Activated CD4-positive, alpha-beta memory T cell treated with anti-CD3 and anti-CD28 coated beads for 36 hours (primary cell): ENCODE measurements at regions of chr16 and their contacts with region 1.

Region 1: GRCh38 chr16:69565671-69566239 is at the start of gene NFAT5:
- DNase-seq: peak; percentile 92
- H3K4me3 Mint-ChIP-seq: peak within 1 kb of the TSS; percentile 96
- H3K27ac Mint-ChIP-seq: peak within 1 kb of the TSS; percentile 94
- H3K4me1 Mint-ChIP-seq: peaks cover 45% of the 10 kb centered on the region
- H3K27me3 Mint-ChIP-seq: no peaks in the 10 kb centered on the region
- total RNA-seq, gene NFAT5: 28.2 to 32.7 TPM

Region 2: GRCh38 chr16:68756250-68756915 is 809.4 kb before region 1 on chr16:
- CTCF ChIA-PET with region 1: no interaction called
- POLR2A ChIA-PET with region 1: no interaction called
- intact Hi-C with region 1: loop called (anchors 10 kb)
- DNase-seq: peak; percentile 89
- H3K4me3 Mint-ChIP-seq: peak overlapping the region; percentile 58
- H3K27ac Mint-ChIP-seq: peak overlapping the region; percentile 96
- H3K4me1 Mint-ChIP-seq: peaks cover 64% of the 10 kb centered on the region
- H3K27me3 Mint-ChIP-seq: no peaks in the 10 kb centered on the region

Region 3: GRCh38 chr16:69386596-69386995 is 179.2 kb before region 1 on chr16:
- CTCF ChIA-PET with region 1: no interaction called
- POLR2A ChIA-PET with region 1: interaction called, 4 read pairs
- intact Hi-C with region 1: loop called (anchors 1 kb)
- DNase-seq: no peak
- H3K4me3 Mint-ChIP-seq: peak overlapping the region; percentile 93
- H3K27ac Mint-ChIP-seq: no peak overlapping the region
- H3K4me1 Mint-ChIP-seq: peaks cover 28% of the 10 kb centered on the region
- H3K27me3 Mint-ChIP-seq: no peaks in the 10 kb centered on the region

Region 4: GRCh38 chr16:69424053-69424934 is 141.5 kb before region 1 on chr16 and contains the start of gene CYB5B:
- CTCF ChIA-PET with region 1: interaction called, 8 read pairs
- POLR2A ChIA-PET with region 1: interaction called, 10 read pairs
- intact Hi-C with region 1: loop called (anchors 1 kb)
- DNase-seq: peak; percentile 98
- H3K4me3 Mint-ChIP-seq: peak within 1 kb of the TSS; percentile 98
- H3K27ac Mint-ChIP-seq: peak within 1 kb of the TSS; percentile 96
- H3K4me1 Mint-ChIP-seq: peaks cover 40% of the 10 kb centered on the region
- H3K27me3 Mint-ChIP-seq: no peaks in the 10 kb centered on the region
- total RNA-seq, gene CYB5B: 147 to 152 TPM

Region 5: GRCh38 chr16:69465083-69465721 is 100.6 kb before region 1 on chr16:
- CTCF ChIA-PET with region 1: interaction called, 3 read pairs
- POLR2A ChIA-PET with region 1: interaction called, 3 read pairs
- intact Hi-C with region 1: loop called (anchors 1 kb)
- DNase-seq: peak; percentile 26
- H3K4me3 Mint-ChIP-seq: peak overlapping the region; percentile 3
- H3K27ac Mint-ChIP-seq: peak overlapping the region; percentile 44
- H3K4me1 Mint-ChIP-seq: peaks cover 51% of the 10 kb centered on the region
- H3K27me3 Mint-ChIP-seq: no peaks in the 10 kb centered on the region

Region 6: GRCh38 chr16:69520800-69521602 is 44.8 kb before region 1 on chr16:
- CTCF ChIA-PET with region 1: interaction called, 4 read pairs
- POLR2A ChIA-PET with region 1: interaction called, 4 read pairs
- intact Hi-C with region 1: loop called (anchors 1 kb)
- DNase-seq: peak; percentile 78
- H3K4me3 Mint-ChIP-seq: no peak overlapping the region
- H3K27ac Mint-ChIP-seq: peak overlapping the region; percentile 79
- H3K4me1 Mint-ChIP-seq: peaks cover 19% of the 10 kb centered on the region
- H3K27me3 Mint-ChIP-seq: no peaks in the 10 kb centered on the region

Region 7: DNA sequence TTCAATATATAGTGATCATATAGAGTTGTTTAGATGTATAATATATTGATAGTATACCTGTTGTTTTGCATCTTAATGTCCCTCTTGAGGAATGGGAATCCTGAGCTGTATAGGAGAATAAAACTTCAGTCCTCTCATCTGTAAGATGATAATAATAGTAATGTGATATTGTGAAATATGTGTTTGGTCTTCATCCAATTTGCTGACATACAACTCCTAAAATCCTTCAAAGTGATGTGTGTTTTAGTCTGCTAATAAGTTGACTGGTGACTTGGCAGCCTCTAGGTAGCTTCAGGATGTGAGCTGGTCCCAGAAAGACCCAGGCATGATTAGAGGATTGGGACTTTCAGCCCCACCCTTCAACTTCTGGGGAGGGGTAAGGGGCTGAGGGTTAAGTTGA is 22.8 kb before region 1 on chr16:
- CTCF ChIA-PET with region 1: no interaction called
- POLR2A ChIA-PET with region 1: no interaction called
- intact Hi-C with region 1: no loop called
- DNase-seq: no peak
- H3K4me3 Mint-ChIP-seq: no peak overlapping the region
- H3K27ac Mint-ChIP-seq: no peak overlapping the region
- H3K4me1 Mint-ChIP-seq: no peaks in the 10 kb centered on the region
- H3K27me3 Mint-ChIP-seq: no peaks in the 10 kb centered on the region

Region 8: DNA sequence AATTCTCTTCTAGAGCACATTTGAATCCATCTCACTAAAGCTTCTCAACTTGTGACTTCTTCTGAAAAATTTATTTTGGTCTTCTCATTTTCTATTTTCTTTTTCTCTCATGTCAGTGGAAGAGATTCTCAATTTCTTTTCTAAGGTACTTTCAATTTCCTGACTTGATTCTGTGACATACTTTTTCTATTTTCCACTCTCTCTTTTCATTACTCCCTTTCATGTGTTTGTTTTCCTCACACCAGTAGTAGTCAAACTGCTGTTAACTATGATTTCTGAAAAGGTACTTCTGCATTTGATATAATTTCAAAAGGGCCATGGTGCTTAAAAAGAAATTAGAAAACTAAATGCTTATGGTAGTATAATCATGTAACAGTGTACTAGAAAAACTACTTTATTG is 41.9 kb after region 1 on chr16:
- CTCF ChIA-PET with region 1: no interaction called
- POLR2A ChIA-PET with region 1: interaction called, 3 read pairs
- intact Hi-C with region 1: loop called (anchors 1 kb)
- DNase-seq: no peak
- H3K4me3 Mint-ChIP-seq: no peak overlapping the region
- H3K27ac Mint-ChIP-seq: peak overlapping the region; percentile 84
- H3K4me1 Mint-ChIP-seq: peaks cover 49% of the 10 kb centered on the region
- H3K27me3 Mint-ChIP-seq: no peaks in the 10 kb centered on the region